AG04450 (cell line): ENCODE measurements at regions of chr16 and their contacts with region 1.

Region 1: DNA sequence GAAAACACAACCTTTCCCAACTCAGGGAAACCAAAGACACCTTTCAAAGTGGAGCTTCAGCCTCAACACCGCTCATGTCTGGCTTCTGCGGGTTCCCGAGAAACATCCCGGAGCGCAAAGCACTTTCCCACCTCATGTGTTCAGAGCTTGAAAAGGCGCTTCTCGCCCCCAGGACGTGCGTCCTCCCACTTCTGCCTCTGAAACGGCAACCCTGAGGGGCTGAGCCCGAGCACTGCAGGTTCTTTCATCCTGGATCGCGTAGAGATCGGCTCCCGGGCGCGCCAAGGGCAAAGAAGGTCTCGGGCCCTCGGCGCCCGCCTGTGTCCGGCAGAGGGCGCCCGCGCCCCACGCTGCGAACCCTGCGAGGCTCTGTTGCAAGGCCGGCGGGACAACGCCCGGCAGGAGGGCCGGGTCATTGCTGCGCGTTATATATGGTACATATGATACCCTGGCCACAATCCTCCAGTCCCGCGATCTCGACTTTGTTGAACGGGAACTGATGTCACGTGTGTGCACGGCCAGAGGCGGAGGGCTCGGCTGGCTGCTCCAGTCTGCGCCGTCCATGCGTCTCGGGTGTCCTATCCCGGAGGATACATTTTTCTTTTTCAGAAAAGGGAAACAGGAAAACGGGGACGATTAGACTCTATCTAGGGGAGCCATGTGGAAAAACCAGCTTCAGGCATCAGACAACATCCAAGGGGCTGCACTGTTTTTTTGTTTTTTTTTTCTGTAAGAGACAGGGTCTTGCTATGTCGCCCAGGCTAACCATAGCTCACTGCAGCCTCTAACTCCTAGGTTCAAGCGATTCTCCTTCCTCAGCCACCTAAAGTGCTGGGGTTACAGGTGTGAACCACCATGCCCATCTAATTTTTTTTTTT is 19.1 kb downstream of the COQ7 start:
- DNase-seq: peak; percentile 84
- H3K4me3 ChIP-seq: peak overlapping the region; percentile 61
- H3K27ac ChIP-seq: no peak overlapping the region
- H3K27me3 ChIP-seq: no peaks in the 10 kb centered on the region
- CTCF ChIP-seq: peak; percentile 97

Region 2: GRCh38 chr16:18983565-18984424 is 102.8 kb before region 1 on chr16 and contains the start of gene TMC7:
- CTCF ChIA-PET with region 1: interaction called, 22 read pairs
- POLR2A ChIA-PET with region 1: no interaction called
- DNase-seq: peak; percentile 50
- H3K4me3 ChIP-seq: peak within 1 kb of the TSS; percentile 58
- H3K27ac ChIP-seq: no peak within 1 kb of the TSS
- H3K27me3 ChIP-seq: no peaks in the 10 kb centered on the region
- CTCF ChIP-seq: peak; percentile 78
- polyA plus RNA-seq, gene TMC7: 0.37 and 0.42 TPM in 2 replicates

Region 3: GRCh38 chr16:19105891-19106624 is 19.5 kb after region 1 on chr16:
- CTCF ChIA-PET with region 1: interaction called, 17 read pairs
- POLR2A ChIA-PET with region 1: no interaction called
- DNase-seq: no peak
- H3K4me3 ChIP-seq: no peak overlapping the region
- H3K27ac ChIP-seq: no peak overlapping the region
- H3K27me3 ChIP-seq: no peaks in the 10 kb centered on the region
- CTCF ChIP-seq: no peak

Region 4: GRCh38 chr16:19168371-19169081 is 82.0 kb after region 1 on chr16:
- CTCF ChIA-PET with region 1: interaction called, 14 read pairs
- POLR2A ChIA-PET with region 1: no interaction called
- DNase-seq: no peak
- H3K4me3 ChIP-seq: peak overlapping the region; percentile 20; the same call in 1 of the 2 replicates
- H3K27ac ChIP-seq: no peak overlapping the region
- H3K27me3 ChIP-seq: peaks cover 31% of the 10 kb centered on the region
- CTCF ChIP-seq: no peak

Region 5: GRCh38 chr16:19210280-19210924 is 123.8 kb after region 1 on chr16:
- CTCF ChIA-PET with region 1: no interaction called
- POLR2A ChIA-PET with region 1: no interaction called
- DNase-seq: peak; percentile 20
- H3K4me3 ChIP-seq: no peak overlapping the region
- H3K27ac ChIP-seq: no peak overlapping the region
- H3K27me3 ChIP-seq: no peaks in the 10 kb centered on the region
- CTCF ChIP-seq: no peak

Region 6: DNA sequence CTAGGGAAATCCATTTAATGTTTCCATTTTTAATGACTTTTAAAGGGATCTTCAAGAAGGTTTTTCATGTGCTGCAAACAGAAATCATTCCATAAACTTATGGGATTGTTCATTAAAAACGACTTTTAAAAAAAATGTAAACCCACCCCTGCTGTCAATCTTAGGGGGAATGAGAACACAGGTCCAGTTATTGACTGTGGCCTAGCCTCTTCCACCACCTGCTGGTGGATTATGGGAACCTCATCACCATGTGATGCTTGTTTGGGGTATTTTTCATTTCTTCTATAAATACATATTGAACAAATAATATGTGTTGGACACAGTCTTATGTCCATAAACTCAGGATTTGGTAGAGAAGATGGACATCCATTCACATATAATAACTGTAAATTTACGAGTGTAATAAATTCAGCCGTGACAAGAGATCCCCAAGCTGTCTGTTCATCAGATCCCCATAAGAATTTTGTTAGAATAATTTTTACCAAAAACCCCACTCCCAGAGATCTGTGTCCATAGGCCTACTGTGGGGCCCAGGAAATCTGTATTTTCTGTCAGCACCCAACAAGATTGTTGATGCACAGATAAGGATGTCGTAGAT is 289.1 kb after region 1 on chr16:
- CTCF ChIA-PET with region 1: interaction called, 101 read pairs
- POLR2A ChIA-PET with region 1: interaction called, 4 read pairs
- DNase-seq: peak; percentile 18
- H3K4me3 ChIP-seq: no peak overlapping the region
- H3K27ac ChIP-seq: no peak overlapping the region
- H3K27me3 ChIP-seq: no peaks in the 10 kb centered on the region
- CTCF ChIP-seq: peak; percentile 90

Region 7: GRCh38 chr16:19771796-19772195 is 685.2 kb after region 1 on chr16:
- CTCF ChIA-PET with region 1: interaction called, 10 read pairs
- POLR2A ChIA-PET with region 1: no interaction called
- DNase-seq: no peak
- H3K4me3 ChIP-seq: no peak overlapping the region
- H3K27ac ChIP-seq: no peak overlapping the region
- H3K27me3 ChIP-seq: no peaks in the 10 kb centered on the region
- CTCF ChIP-seq: no peak